HEK293 (cell line): ENCODE measurements at regions of chr3 and their contacts with region 1.

Region 1: GRCh38 chr3:116785226-116785625 is 75.6 kb downstream of the TUSC7 start:
- H3K4me3 ChIP-seq: no peak overlapping the region
- H3K27ac ChIP-seq: no peak overlapping the region
- H3K4me1 ChIP-seq: no peaks in the 10 kb centered on the region
- CTCF ChIP-seq: no peak

Region 2: DNA sequence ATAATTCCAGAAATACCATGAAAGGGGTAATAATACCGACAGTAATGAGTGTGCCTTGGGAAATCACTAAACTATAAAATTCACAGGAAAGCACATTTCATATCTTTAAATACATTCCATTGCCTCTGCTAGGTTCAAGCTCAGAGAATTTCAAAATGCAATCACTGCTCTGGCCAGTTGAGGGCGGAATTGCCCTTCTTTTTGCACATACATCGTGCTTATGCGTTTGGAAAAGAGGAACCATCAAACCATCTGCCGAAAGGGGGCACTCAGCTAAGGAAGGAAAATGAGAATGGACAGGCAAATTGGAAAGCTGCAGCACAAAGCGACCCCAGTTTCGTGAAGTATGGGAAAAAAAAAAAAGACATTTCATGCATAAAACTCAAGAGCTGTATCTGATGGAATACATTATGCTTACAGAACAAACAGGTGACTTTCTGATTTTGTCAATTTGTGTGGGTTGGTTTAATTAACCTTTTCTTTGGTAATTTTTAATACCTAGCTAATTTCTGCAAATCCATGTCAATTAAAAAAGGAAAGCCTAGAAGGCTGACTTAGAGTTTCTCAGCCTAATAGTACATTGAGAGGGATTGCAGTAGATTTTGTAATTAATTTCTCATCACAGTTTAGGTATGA is 14.3 kb before region 1 on chr3:
- CTCF ChIA-PET with region 1: interaction called, 10 read pairs
- POLR2A ChIA-PET with region 1: no interaction called
- H3K4me3 ChIP-seq: no peak overlapping the region
- H3K27ac ChIP-seq: no peak overlapping the region
- H3K4me1 ChIP-seq: no peaks in the 10 kb centered on the region
- CTCF ChIP-seq: peak; percentile 28; the same call in 1 of the 2 replicates